Activated B cell treated with CpG ODN at 0.5 μM for 24 hours (primary cell): ENCODE measurements at regions of chr2 and their contacts with region 1.

Region 1: DNA sequence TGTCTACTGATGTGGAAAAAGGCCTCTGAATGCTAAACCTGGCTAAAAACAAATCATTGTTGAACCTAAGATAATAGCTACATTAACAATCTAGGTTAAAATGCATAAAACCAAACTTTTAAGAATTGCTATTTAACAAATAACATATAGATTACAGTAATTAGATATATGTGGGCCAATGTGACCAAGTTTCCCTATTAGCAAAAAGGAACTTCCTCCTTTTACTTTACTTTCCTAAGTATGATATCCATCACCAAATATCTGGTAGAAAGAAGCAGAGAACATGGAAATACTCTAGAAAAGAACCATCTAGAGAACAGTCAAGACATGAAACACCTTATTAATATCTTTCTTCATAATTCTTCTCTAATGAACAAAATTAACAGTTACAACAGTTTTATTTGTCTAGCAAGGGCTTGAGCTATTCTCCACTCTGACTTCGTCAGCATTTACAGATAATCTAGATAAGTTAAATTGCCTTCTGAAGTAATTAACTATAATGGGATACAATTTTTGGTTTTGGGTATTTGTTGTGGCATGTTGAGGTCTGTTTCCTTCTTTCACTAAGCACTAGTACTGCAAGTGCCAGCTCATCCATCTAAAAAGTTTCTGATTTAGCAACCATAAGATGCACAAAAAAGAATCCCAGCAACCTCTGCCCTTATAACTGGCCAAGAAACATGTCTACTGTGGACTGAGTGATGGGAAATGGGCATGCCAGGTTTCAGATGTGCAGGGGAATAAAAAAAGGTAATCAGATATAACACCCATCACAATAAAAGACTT is 53.3 kb downstream of the MEMO1 start:
- DNase-seq: no peak
- ATAC-seq: peak; percentile 37
- H3K4me3 Mint-ChIP-seq: peak overlapping the region; percentile 55
- H3K27ac Mint-ChIP-seq: peak overlapping the region; percentile 65
- H3K4me1 Mint-ChIP-seq: peaks cover 59% of the 10 kb centered on the region
- H3K27me3 Mint-ChIP-seq: no peaks in the 10 kb centered on the region
- CTCF ChIP-seq: no peak

Region 2: DNA sequence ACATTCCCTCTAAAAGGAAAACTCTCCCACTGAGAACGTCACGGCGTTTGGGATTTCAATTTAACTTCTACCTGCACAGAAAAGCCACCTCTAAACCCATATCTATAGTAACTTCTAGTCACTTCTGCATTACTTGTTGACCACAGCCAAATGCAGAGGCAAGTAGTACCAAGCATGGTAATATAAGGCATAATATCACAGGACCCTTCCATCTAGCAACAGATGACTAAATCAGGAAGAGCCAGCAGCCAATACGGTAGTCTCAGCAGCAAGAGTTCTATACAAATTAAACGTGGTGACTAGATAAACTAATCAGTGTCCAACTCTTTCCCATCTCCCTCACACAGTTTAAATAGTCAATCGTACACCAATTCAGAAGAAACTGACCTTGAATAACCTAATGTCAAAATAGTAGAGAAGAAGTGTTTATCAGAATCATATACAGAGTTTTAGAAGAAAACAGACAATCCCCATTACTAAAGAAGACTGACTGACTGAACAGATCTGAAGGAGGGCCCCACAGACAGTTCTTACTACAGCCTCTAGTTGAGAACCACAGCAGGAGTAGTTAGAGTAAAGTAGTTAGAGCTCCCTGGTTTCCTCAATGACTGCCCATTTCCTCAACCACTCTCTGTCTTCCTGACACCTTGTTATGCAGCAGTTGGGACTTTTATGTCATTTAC is 23.3 kb after region 1 on chr2:
- CTCF ChIA-PET with region 1: interaction called, 4 read pairs
- POLR2A ChIA-PET with region 1: interaction called, 4 read pairs
- intact Hi-C with region 1: loop called (anchors 2 kb)
- DNase-seq: no peak
- ATAC-seq: peak; percentile 99
- H3K4me3 Mint-ChIP-seq: peak overlapping the region; percentile 56
- H3K27ac Mint-ChIP-seq: peak overlapping the region; percentile 87
- H3K4me1 Mint-ChIP-seq: peaks cover 34% of the 10 kb centered on the region
- H3K27me3 Mint-ChIP-seq: no peaks in the 10 kb centered on the region
- CTCF ChIP-seq: no peak

Region 3: DNA sequence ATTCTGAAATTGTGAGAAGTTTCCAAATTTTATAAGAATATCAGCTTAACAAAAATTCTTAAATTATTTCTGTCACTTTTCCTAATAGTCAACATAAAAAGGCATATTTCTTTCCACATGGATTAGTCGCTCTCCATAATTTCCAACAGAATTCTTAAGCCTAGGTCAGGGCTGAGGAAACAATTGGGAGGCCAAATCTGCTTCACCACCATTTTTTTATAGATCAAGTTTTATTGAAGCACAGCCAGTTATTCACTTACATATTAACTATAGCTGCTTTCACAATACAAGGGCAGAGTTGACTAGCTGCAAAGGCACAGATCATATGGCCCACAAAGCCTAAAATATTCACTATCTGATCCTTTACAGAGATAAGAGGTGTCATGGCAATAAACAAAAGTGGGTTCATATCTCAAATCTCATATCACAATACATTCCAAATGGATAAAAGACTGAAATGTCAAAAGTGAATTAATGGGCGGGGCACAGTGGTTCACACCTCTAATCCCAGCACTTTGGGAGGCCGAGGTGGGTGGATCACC is 34.5 kb after region 1 on chr2:
- CTCF ChIA-PET with region 1: no interaction called
- POLR2A ChIA-PET with region 1: no interaction called
- intact Hi-C with region 1: loop called (anchors 5 kb)
- DNase-seq: no peak
- ATAC-seq: no peak
- H3K4me3 Mint-ChIP-seq: no peak overlapping the region
- H3K27ac Mint-ChIP-seq: no peak overlapping the region
- H3K4me1 Mint-ChIP-seq: peaks cover 43% of the 10 kb centered on the region
- H3K27me3 Mint-ChIP-seq: no peaks in the 10 kb centered on the region
- CTCF ChIP-seq: no peak